OCI-LY7 (cell line): ENCODE measurements at regions of chr6 and their contacts with region 1.

Region 1: DNA sequence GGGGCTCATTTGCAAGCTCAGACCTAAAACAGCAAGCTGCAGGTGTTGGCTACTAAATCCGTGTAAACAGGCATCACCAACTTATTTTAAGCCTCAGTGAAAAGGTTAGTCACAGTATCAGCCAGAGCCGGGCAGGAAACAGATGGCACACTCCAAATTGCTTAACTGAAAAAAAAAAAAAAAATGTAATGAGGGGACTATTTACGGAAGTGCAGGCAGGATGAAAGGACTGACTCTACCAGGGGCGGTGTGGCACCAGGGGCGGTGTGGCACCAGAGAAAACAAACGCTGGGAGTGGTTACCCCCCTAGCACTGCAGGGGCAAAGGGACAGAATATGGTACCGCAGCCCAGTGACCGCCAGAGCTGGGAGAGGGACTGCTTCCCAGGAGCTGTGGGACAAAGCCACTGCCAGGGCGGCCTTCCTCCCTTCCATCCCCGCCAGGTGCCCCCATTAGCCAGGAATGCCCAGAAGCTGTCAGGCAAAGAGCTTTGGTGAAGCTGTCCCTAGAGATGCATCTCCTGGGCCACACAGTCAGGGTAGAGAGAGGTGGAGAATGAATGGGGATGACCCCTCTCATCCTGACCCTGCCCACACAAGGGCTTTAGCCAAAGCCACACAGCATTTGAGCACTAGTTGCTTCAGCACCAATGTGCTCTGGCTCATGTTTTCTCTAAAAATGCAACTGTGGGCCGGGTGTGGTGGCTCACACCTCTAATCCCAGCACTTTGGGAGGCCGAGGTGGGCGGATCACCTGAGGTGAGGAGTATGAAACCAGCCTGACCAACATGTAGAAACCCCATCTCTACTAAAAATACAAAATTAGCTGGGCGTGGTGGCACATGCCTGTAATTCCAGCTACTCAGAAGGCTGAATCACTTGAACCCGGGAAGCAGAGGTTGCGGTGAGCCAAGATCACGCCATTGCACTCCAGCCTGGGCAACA is 39.6 kb upstream of the GFOD1 start:
- DNase-seq: peak; percentile 98
- H3K4me3 ChIP-seq: peak overlapping the region; percentile 59
- H3K27ac ChIP-seq: peak overlapping the region; percentile 99
- H3K4me1 ChIP-seq: peaks cover 84% of the 10 kb centered on the region
- CTCF ChIP-seq: peak; percentile 55

Region 2: DNA sequence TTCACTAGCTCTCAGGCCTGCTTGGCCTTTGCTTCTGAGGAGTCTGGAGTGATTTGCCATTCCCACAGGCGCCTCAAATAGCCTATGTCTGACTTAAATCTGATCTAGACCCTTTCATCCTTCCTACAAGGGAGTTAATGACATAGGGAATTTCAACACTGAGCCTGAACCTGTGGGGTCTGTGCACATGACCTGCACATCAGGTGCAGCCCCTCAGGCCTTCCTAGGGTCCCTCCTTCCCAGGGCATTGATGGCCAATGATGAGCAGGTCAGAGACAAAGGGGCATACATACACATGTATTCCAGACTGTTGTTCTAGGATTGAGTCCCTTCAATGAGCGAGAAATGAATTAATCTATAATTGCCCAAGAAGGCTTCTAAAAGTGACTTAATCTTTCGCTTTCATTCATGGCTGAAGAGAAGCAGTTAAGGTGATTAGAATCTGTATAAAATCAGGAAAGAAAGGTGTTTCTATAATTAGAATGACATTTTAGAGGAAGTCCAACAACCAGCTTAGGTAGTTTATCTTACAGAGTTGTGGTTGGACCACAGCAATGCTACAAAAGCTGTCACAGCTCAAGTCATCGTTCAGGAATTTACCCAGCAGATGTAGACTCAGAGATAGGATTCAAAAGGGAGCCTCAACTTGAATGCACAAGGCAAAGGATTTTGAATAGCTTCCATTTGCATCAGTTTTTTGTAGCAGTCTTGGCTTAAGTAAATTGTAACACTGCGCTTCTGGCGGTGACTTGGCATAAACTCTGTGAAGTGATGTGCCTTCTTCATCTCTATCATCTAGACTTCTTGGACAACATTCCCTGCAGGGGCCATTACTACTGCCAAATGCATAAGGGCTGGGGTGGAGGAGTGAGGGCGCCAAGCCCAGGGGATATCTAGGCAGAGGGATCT is 171.7 kb before region 1 on chr6:
- CTCF ChIA-PET with region 1: no interaction called
- POLR2A ChIA-PET with region 1: interaction called, 6 read pairs
- intact Hi-C with region 1: loop called (anchors 2 kb)
- DNase-seq: peak; percentile 45
- H3K4me3 ChIP-seq: peak overlapping the region; percentile 54
- H3K27ac ChIP-seq: peak overlapping the region; percentile 89
- H3K4me1 ChIP-seq: peaks cover 58% of the 10 kb centered on the region
- CTCF ChIP-seq: no peak

Region 3: DNA sequence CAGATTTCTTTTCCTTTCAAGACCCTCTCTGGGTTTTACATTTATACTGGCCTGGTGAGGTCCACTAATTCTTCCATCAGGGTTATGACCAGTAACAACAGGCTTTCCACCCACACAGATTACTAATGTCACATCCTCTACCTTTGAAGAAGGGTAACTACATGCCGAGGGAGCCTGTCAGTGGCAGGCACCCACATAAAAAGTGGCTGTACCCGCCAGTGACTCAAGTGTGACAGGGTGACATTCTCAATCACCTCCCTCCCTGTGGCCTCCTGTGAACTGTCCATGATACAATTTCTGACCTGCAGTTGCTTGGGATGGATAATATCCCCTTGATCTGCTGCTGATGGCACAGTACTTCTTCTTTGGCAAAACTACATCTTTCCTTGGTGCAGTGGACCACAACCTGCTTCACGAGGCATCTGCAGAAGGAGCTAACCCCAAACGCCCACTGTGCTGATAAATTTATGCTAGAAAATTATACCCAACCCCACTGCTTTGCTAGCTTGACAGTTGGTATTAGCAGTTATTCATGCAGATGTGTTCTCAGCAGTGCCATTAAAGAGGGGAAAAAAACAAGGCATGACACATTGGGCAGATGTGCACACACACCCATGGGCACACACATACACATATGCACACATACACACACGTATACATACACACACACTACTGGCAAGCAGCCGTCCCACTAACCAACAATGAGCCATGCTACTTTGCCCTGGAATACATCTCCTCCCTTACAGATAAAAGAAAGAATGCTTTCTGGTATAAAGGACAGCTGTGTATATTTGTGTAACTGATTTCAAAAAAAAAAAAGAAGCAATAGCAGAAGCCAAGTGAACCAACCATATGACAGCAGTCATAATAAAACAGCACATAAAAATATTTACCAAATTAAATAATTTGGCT is 60.4 kb before region 1 on chr6:
- CTCF ChIA-PET with region 1: no interaction called
- POLR2A ChIA-PET with region 1: interaction called, 5 read pairs
- intact Hi-C with region 1: loop called (anchors 1 kb)
- DNase-seq: no peak
- H3K4me3 ChIP-seq: peak overlapping the region; percentile 2
- H3K27ac ChIP-seq: no peak overlapping the region
- H3K4me1 ChIP-seq: peaks cover 79% of the 10 kb centered on the region
- CTCF ChIP-seq: no peak

Region 4: DNA sequence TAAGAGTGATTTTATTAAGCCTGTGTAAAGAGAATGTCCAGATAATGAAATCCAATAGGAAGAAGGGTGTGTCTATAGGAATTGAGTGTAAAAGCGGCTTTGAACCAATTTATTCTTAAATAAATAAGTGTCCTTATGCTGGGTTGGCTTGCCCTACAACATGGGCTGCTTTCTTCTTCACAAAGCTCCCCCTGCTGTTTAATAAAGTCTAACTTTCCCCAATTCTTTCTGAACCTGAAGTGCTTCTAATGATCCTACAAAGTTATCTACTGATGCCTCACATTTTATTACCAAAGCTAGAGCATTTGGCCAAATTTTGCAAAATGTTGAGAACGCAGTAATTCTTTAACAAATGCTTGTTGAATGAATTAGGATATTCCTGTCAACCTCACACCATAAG is 11.1 kb after region 1 on chr6:
- CTCF ChIA-PET with region 1: interaction called, 3 read pairs
- POLR2A ChIA-PET with region 1: interaction called, 22 read pairs
- intact Hi-C with region 1: no loop called
- DNase-seq: peak; percentile 69
- H3K4me3 ChIP-seq: no peak overlapping the region
- H3K27ac ChIP-seq: no peak overlapping the region
- H3K4me1 ChIP-seq: peaks cover 65% of the 10 kb centered on the region
- CTCF ChIP-seq: peak; percentile 85

Region 5: GRCh38 chr6:13711733-13712598 is 185.0 kb after region 1 on chr6 and contains the start of gene RANBP9:
- CTCF ChIA-PET with region 1: no interaction called
- POLR2A ChIA-PET with region 1: no interaction called
- intact Hi-C with region 1: loop called (anchors 5 kb)
- DNase-seq: peak; percentile 95
- H3K4me3 ChIP-seq: peak within 1 kb of the TSS; percentile 74
- H3K27ac ChIP-seq: peak within 1 kb of the TSS; percentile 78
- H3K4me1 ChIP-seq: peaks cover 20% of the 10 kb centered on the region
- CTCF ChIP-seq: no peak
- total RNA-seq, gene RANBP9: 20.5 and 22.2 TPM in 2 replicates